Tibial artery (tissue), 4 donors: ENCODE measurements at regions of chr9 and their contacts with region 1.

Region 1: GRCh38 chr9:2234371-2234893 is 219.3 kb downstream of the SMARCA2 start:
- DNase-seq: no peak
- H3K4me3 ChIP-seq: no peak overlapping the region
- H3K27ac ChIP-seq: no peak overlapping the region
- H3K4me1 ChIP-seq: peaks cover 0 to 4% (median 0%) of the 10 kb centered on the region in 4 donors
- H3K27me3 ChIP-seq: no peaks in the 10 kb centered on the region
- CTCF ChIP-seq: no peak

Region 2: GRCh38 chr9:2181792-2182191 is 52.6 kb before region 1 on chr9:
- intact Hi-C with region 1: loop called (anchors 10 kb)
- DNase-seq: no peak
- H3K4me3 ChIP-seq: no peak overlapping the region
- H3K27ac ChIP-seq: no peak overlapping the region
- H3K4me1 ChIP-seq: no peaks in the 10 kb centered on the region
- H3K27me3 ChIP-seq: no peaks in the 10 kb centered on the region
- CTCF ChIP-seq: peak; percentile 35 to 41